Caco-2 (cell line): ENCODE measurements at regions of chr20 and their contacts with region 1.

Region 1: GRCh38 chr20:62485062-62485700 is 9.4 kb upstream of the GATA5 start:
- DNase-seq: peak; percentile 72 to 89
- H3K4me3 ChIP-seq: no peak overlapping the region
- H3K4me3 Mint-ChIP-seq: peak overlapping the region; percentile 50
- H3K27ac Mint-ChIP-seq: peak overlapping the region; percentile 88
- H3K4me1 ChIP-seq: peaks cover 99% of the 10 kb centered on the region
- H3K4me1 Mint-ChIP-seq: peaks cover 70% of the 10 kb centered on the region
- H3K27me3 ChIP-seq: no peaks in the 10 kb centered on the region
- H3K27me3 Mint-ChIP-seq: no peaks in the 10 kb centered on the region
- CTCF ChIP-seq: peak in 1 of 2 experiments; percentile 0

Region 2: DNA sequence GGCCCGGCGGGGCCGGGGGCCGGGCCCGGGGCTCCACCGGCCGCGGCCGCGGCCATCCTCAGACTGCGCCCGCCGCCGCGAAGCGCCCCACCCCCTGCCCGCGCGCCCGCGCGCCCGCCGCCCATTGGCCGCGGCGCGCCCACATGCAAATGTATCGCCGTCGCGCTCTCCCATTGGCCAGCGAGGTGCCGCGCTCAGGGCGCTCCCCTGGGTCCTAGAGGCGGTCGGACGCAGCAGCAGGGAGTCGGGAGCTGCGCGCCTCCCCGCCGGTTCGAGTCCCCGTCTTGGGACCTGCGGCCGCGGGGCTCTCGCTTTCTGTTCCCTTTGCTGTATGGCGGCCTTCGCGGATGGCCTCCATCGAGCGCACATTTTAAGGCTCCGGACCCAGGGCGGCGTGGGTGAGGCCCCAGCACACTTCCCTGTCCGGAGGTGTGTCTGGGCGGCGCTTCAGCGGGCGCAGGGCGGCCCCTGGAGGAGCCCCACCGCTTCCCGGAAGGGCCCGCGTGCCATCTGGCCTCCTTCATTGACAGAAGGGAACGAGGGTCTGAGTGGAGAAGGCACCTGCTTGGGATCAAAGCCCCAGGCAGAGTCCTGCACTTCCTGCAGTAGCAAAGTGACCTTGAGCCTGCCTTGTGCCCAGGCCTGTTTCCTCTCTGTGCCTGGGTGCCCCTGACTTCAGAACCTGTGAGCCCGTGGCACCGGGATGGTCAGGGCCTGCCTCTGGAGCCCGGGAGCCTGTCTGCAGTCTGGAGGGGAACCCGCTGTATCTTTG is 77.8 kb before region 1 on chr20 and contains the start of gene CABLES2:
- CTCF ChIA-PET with region 1: no interaction called
- POLR2A ChIA-PET with region 1: no interaction called
- intact Hi-C with region 1: loop called (anchors 2 kb)
- DNase-seq: peak; percentile 99 to 100
- H3K4me3 ChIP-seq: peak within 1 kb of the TSS; percentile 95
- H3K4me3 Mint-ChIP-seq: peak within 1 kb of the TSS; percentile 78
- H3K27ac Mint-ChIP-seq: peak within 1 kb of the TSS; percentile 83
- H3K4me1 ChIP-seq: peaks cover 58% of the 10 kb centered on the region
- H3K4me1 Mint-ChIP-seq: peaks cover 41% of the 10 kb centered on the region
- H3K27me3 ChIP-seq: no peaks in the 10 kb centered on the region
- H3K27me3 Mint-ChIP-seq: no peaks in the 10 kb centered on the region
- CTCF ChIP-seq: peak in 1 of 2 experiments; percentile 54
- total RNA-seq, gene CABLES2: 30.7 and 36.4 TPM in 2 replicates